Dorsolateral prefrontal cortex (tissue), 120 donors: ENCODE measurements at regions of chr12 and their contacts with region 1.

Region 1: DNA sequence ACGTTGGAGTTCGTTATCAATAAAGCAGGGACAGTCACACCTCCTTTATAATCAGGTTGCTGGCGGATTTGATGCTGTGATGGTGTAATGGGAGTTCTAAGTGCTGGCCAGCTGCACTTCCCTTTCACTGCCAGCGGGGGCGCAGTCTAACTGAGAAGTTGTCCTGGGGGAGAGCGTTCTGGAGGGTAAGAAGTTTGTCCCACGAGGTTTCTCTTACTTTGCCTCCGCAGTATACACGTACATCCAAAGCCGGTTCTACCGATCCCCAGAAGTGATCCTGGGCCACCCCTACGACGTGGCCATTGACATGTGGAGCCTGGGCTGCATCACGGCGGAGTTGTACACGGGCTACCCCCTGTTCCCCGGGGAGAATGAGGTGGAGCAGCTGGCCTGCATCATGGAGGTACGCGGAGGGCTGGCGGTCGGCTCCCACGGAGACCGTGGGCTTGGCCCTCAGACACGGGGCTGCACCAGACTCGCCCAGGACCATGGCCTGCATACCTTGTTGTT is 42.7 kb downstream of the DYRK4 start:
- DNase-seq: peak; percentile 62 to 86 (median 82)
- H3K4me3 ChIP-seq: peak overlapping the region; percentile 62 to 99 (median 86)
- H3K27ac ChIP-seq: peak overlapping the region in 49 of 59 donors; percentile 2 to 93 (median 67)
- H3K27me3 ChIP-seq: no peaks in the 10 kb centered on the region
- CTCF ChIP-seq: peak; percentile 93 to 100 (median 98)

Region 2: GRCh38 chr12:4538207-4539160 is 66.3 kb before region 1 on chr12 and contains the start of gene RAD51AP1:
- intact Hi-C with region 1: loop called (anchors 5 kb)
- DNase-seq: peak; percentile 88 to 95 (median 94)
- H3K4me3 ChIP-seq: peak within 1 kb of the TSS; percentile 51 to 100 (median 88)
- H3K27ac ChIP-seq: peak within 1 kb of the TSS; percentile 71 to 99 (median 96)
- H3K27me3 ChIP-seq: no peaks in the 10 kb centered on the region
- CTCF ChIP-seq: peak in 29 of 56 donors; percentile 4 to 57 (median 34)
- total RNA-seq, gene RAD51AP1: 0.65 to 6.6 (median 2.8) TPM

Region 3: DNA sequence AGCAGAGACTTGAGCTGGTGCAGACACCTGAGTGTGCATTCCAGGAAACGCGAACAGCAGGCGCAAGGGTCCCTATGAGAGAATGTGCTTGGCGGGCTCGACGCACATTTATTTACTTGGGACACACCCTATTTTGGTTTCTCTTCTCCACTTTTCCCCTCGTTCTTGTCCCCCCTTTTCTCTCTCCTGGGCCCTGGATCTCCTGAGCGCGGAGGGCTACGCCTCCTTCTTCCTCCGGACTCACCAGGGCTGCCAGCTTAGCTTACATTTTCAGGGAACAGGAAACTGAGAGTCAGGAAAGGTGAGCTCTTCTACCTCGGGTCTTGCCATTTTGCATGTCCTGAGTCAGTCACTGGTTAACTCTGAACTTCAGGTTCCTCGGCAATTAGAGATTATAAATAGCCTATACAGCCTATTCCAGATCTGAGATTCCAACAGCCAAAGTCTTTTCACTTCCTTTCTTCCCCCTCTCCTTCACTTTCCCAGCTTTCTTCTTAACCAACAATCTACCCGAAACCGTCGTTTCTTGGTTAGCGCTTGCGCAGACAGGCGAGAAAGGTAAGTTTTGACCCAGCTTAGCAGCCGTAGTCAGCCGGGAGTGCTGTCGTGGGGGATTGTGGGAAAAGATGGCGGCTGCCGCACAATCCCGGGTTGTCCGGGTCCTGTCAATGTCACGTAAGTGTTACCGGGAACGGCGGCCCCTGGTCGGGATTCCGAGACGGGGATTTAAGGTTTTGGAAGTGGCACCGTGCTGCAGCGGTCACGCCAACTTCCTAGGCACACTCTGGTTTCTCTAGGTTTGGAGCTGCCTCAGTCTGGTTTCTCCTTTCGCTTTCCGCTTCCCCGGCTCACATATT is 44.0 kb after region 1 on chr12 and contains the starts of genes AKAP3 and NDUFA9:
- intact Hi-C with region 1: loop called (anchors 2 kb)
- DNase-seq: peak; percentile 74 to 88 (median 82)
- H3K4me3 ChIP-seq: peak within 1 kb of the TSS; percentile 64 to 99 (median 87)
- H3K27ac ChIP-seq: peak within 1 kb of the TSS; percentile 2 to 94 (median 81)
- H3K27me3 ChIP-seq: no peaks in the 10 kb centered on the region
- CTCF ChIP-seq: peak in 39 of 56 donors; percentile 5 to 58 (median 28)
- total RNA-seq, gene AKAP3: 0.41 to 13.6 (median 3.8) TPM
- total RNA-seq, gene NDUFA9: 42.3 to 124 (median 84.2) TPM

Region 4: DNA sequence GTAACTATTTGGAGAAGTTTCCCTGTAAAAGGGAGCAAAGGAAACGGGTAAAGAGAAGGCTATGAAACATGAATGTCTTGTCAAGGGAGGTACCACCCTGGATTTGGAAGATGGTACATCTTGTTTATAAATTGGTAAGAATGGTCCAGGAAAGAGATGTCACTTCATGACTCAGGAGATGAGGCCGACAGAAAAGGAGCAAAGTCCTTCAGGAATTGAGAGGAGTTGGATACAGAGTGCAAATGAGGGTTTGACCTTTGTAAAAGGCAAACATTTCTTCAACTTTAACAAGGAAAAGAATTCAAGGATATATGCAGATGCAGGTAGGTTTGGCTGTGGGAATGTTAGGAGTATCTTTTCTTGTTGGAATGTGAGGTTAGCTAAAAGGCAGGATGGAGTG is 75.0 kb after region 1 on chr12:
- intact Hi-C with region 1: no loop called
- DNase-seq: no peak
- H3K4me3 ChIP-seq: no peak overlapping the region
- H3K27ac ChIP-seq: no peak overlapping the region
- H3K27me3 ChIP-seq: no peaks in the 10 kb centered on the region
- CTCF ChIP-seq: no peak

Region 5: DNA sequence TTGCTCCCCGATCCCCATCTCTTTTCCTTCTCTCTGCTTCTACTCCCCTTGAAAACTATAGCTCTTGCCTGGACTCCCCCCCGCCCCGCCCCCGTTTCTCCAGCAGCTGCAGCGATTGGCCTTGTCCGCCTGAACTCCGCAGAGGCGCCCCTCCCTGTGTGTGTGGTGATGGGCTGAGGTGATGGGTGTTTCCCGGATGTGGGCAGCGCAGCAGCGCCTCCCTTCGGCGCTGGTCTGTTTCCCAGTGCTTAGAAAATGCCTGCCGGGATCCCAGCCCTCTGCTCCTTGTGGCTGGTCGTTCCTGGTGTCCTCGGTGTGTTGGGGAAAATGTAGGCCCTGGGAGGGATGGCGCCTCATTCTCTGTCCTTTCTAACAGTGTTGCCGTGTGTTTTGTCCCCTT is 158.8 kb after region 1 on chr12:
- intact Hi-C with region 1: loop called in 1 of 2 experiments (anchors 10 kb)
- DNase-seq: no peak
- H3K4me3 ChIP-seq: no peak overlapping the region
- H3K27ac ChIP-seq: no peak overlapping the region
- H3K27me3 ChIP-seq: no peaks in the 10 kb centered on the region
- CTCF ChIP-seq: peak in 1 of 56 donors; percentile 20